Posterior vena cava (tissue), 2 donors: ENCODE measurements at regions of chr10 and their contacts with region 1.

Region 1: DNA sequence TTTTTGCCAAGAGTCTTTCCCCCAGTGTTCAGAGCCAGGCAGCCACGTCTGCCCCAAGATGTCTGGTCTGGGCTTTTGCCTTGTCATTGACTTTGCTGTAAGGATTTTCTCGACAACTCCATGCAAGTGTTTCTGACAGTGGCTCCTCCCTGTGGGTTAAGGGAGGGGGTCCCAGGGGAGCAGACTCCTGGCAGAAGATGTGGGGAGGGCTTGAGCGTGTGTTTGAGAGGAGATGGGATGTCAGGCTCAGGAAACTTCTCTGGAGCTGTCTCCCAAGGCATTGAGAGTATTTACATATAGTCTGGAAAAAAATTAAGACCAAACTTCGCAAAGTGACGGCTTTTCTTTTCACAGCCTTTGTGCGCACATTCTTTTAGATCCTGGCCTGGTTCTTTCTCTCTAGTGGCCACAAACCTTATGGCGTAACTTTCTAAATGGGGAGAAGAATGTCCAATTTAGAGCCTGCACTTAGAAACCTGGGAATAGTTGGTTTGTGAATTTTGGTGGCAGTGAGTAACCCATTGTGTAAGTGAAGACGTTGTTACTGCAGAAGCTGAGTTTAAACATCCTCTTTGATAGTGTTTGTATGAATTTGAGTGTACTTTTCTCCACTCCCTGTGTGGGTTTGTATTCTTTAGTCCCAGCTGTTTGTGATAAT is 201.5 kb downstream of the LRMDA start:
- DNase-seq: no peak

Region 2: GRCh38 chr10:75417522-75417927 is 215.4 kb before region 1 on chr10:
- intact Hi-C with region 1: loop called in 1 of 2 experiments (anchors 5 kb)
- DNase-seq: no peak